Thyroid gland (tissue), 4 donors: ENCODE measurements at regions of chr10 and their contacts with region 1.

Region 1: GRCh38 chr10:98309366-98310355 is 41.7 kb upstream of the LOXL4 start:
- DNase-seq: peak; percentile 76 to 79
- H3K4me3 ChIP-seq: no peak overlapping the region
- H3K27ac ChIP-seq: no peak overlapping the region
- H3K4me1 ChIP-seq: peaks cover 3 to 10% of the 10 kb centered on the region in 2 donors
- H3K27me3 ChIP-seq: no peaks in the 10 kb centered on the region
- CTCF ChIP-seq: peak; percentile 48 to 94 (median 82)
- POLR2A ChIP-seq: no peak

Region 2: GRCh38 chr10:98170249-98171117 is 139.2 kb before region 1 on chr10:
- intact Hi-C with region 1: loop called (anchors 5 kb)
- DNase-seq: peak; percentile 48 to 49
- H3K4me3 ChIP-seq: no peak overlapping the region
- H3K27ac ChIP-seq: no peak overlapping the region
- H3K4me1 ChIP-seq: peaks cover 0 to 4% of the 10 kb centered on the region in 2 donors
- H3K27me3 ChIP-seq: no peaks in the 10 kb centered on the region
- CTCF ChIP-seq: peak; percentile 69 to 80 (median 76)
- POLR2A ChIP-seq: no peak

Region 3: DNA sequence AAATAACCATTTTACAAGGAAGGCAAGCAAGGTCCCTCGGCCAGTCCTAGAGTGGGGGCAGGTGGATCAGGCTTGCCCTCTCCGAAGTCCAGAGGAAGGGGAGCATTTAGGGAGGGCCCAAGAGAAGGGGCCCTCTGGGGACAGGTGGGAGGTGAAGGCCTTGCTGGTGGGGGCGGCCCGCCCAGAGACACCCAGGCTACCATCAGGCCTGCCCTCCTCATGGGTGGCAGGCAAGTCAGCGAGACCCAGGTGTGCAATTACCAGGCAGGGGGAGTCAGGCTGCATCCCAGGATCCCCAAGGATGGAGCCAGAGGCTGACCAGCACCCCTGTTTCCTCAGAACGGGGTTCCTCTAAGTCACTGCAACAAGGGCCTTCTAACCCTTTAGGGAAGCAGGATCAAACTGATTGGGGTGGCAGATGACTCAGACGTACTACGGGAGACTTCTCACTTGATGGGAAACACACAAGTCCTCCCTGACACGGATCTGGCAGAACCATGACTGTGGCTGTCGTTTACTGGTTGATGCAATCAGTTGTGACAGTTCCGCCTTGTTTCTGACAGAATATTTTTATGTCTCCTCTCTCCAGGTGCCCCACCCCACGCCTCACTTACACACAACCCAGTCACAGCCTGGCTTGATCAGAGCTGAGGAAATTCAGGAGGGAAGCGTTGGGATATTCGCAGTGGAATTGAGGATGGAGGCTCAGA is 49.9 kb before region 1 on chr10:
- intact Hi-C with region 1: loop called (anchors 5 kb)
- DNase-seq: no peak
- H3K4me3 ChIP-seq: no peak overlapping the region
- H3K27ac ChIP-seq: no peak overlapping the region
- H3K4me1 ChIP-seq: peaks cover 14 to 19% of the 10 kb centered on the region in 2 donors
- H3K27me3 ChIP-seq: no peaks in the 10 kb centered on the region
- CTCF ChIP-seq: no peak
- POLR2A ChIP-seq: no peak

Region 4: GRCh38 chr10:98404571-98405359 is 95.1 kb after region 1 on chr10:
- intact Hi-C with region 1: no loop called
- DNase-seq: no peak
- H3K4me3 ChIP-seq: no peak overlapping the region
- H3K27ac ChIP-seq: no peak overlapping the region
- H3K4me1 ChIP-seq: no peaks in the 10 kb centered on the region
- H3K27me3 ChIP-seq: no peaks in the 10 kb centered on the region
- CTCF ChIP-seq: no peak
- POLR2A ChIP-seq: no peak